Heart right ventricle (tissue), 16 donors: ENCODE measurements at regions of chr11 and their contacts with region 1.

Region 1: DNA sequence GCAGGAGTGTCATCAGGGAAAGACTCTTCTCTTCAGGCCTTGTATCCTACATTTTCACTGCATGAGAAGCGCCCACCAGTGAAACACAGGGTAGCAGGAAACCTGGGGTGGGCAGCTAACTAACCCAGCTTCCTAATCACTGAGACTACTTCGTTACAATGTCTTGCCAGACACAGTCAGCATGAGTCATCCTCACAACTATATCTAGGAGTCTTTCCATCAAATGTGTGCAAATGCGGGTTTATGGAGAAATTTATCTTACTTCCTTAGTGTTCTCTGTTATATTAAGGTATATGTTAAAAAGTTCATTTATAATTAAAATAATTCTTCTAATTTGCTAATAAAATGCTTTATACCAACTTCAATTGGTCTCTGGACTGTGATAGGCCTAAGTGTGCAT is 79.9 kb upstream of the RAB1B start:
- DNase-seq: no peak
- ATAC-seq: no peak
- H3K4me3 ChIP-seq: no peak overlapping the region
- H3K27ac ChIP-seq: no peak overlapping the region
- H3K4me1 ChIP-seq: peaks cover 0 to 16% (median 7%) of the 10 kb centered on the region in 9 donors
- H3K27me3 ChIP-seq: no peaks in the 10 kb centered on the region
- CTCF ChIP-seq: no peak

Region 2: DNA sequence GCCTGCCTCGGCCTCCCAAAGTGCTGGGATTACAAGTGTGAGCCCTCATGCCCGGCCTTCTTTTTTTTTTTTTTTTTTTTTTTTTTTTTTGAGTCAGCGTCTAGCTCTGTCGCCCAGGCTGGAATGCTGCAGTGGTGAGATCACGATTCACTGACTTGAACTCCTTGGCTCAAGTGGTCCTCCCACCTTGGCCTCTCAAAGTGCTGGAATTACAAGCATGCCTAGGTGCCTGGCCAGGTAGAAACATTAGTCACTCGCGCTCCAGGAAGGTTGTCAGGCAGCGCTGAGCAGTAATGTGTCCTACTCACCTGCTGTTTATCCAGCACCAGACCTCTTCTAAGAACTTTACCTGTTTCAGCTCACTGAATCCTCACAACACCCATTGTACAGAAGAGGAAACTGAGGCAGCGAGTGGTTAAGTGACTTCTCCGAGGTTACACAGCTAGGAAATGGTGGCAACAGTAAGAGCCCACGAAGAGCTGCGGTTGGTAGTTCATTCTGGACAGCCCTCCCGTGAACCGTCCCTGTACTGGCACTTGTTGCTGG is 177.3 kb before region 1 on chr11:
- intact Hi-C with region 1: no loop called
- DNase-seq: no peak
- ATAC-seq: no peak
- H3K4me3 ChIP-seq: peak overlapping the region in 2 of 10 donors; percentile 0 to 30
- H3K27ac ChIP-seq: no peak overlapping the region
- H3K4me1 ChIP-seq: peaks cover 0 to 30% (median 14%) of the 10 kb centered on the region in 9 donors
- H3K27me3 ChIP-seq: peaks cover 8 to 39% (median 23%) of the 10 kb centered on the region in 7 donors
- CTCF ChIP-seq: no peak

Region 3: DNA sequence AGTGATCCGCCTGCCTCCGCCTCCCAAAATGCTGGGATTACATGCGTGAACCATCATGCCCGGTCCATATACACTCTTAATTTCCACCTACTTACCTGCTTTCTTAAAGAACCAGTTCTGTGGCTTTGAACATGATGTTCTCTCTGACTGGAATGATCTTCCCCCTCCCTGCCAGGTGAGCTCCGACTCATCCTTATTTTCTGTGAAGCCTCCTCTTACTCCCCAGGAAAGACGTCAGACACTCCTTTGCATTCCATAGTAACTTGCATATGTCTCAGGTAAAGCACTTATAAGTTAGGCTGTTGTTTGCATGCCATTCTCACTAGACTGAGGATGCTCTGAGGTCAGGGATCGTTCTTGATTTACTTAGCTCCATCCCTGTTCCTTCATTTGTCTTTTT is 11.9 kb before region 1 on chr11:
- intact Hi-C with region 1: loop called in 1 of 10 experiments (anchors 1 kb)
- DNase-seq: no peak
- ATAC-seq: no peak
- H3K4me3 ChIP-seq: no peak overlapping the region
- H3K27ac ChIP-seq: no peak overlapping the region
- H3K4me1 ChIP-seq: no peaks in the 10 kb centered on the region
- H3K27me3 ChIP-seq: no peaks in the 10 kb centered on the region
- CTCF ChIP-seq: no peak

Region 4: DNA sequence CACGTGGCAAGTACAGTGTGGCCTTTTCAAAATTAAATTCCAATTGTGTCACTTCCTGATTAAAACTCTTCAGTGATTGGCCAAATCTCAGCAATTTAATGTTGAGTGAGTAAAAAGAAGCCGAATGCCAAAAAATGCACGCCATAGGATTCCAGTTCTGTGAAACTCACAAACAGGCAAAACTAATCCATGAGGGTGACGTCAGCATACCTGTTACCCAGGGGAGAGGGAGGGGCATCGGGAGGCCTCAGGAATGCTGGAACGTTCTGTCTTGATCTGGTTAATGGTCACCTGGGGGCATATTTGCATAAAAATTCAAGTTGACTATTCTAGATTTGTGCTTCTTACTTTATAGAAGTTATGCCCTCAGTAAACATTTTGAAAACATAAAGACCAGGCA is 39.9 kb after region 1 on chr11:
- intact Hi-C with region 1: no loop called
- DNase-seq: no peak
- ATAC-seq: no peak
- H3K4me3 ChIP-seq: no peak overlapping the region
- H3K27ac ChIP-seq: no peak overlapping the region
- H3K4me1 ChIP-seq: no peaks in the 10 kb centered on the region
- H3K27me3 ChIP-seq: no peaks in the 10 kb centered on the region
- CTCF ChIP-seq: no peak

Region 5: DNA sequence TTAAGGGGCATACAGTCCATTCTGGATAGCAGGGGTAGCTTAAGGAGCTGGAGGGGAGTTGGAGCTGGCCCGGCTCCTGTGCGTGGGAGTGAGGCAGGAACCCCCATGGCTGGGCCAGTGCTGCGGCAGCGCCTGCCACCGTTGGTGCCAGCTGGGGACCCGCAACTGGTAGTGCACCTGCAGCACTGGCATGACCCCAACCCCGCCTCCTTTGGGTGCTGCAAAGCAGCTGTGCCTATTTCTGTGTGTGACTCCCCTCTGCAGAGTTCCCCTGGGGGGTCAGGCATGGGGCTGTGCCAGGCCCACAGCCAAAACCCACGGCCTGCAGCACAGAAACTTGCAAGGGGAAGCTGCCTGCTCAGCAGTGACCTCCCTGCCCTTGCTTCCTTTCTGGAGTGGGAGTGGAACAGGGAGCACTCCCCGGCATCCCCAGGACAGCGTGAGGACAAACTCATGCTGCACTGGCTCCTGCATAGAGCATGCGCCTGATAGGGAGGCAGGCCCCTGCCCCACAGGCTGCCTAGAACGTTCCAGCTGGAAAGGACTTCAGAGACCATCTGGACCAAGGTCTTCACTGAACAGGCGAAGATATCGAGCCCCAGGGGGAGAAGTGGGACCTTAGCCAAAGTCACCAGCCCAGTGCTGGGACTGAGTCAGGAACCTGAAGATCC is 53.6 kb after region 1 on chr11:
- intact Hi-C with region 1: loop called in 1 of 10 experiments (anchors 5 kb)
- DNase-seq: no peak
- ATAC-seq: peak in 5 of 8 donors; percentile 25 to 56 (median 46)
- H3K4me3 ChIP-seq: no peak overlapping the region
- H3K27ac ChIP-seq: no peak overlapping the region
- H3K4me1 ChIP-seq: peaks cover 0 to 11% (median 3%) of the 10 kb centered on the region in 9 donors
- H3K27me3 ChIP-seq: no peaks in the 10 kb centered on the region
- CTCF ChIP-seq: no peak

Region 6: GRCh38 chr11:66386171-66387069 is 197.8 kb after region 1 on chr11:
- intact Hi-C with region 1: no loop called
- DNase-seq: peak; percentile 79 to 82
- ATAC-seq: peak in 7 of 8 donors; percentile 49 to 78 (median 65)
- H3K4me3 ChIP-seq: peak overlapping the region in 7 of 10 donors; percentile 6 to 47 (median 17)
- H3K27ac ChIP-seq: peak overlapping the region in 1 of 10 donors; percentile 1
- H3K4me1 ChIP-seq: peaks cover 0 to 14% (median 8%) of the 10 kb centered on the region in 9 donors
- H3K27me3 ChIP-seq: peaks cover 0 to 15% (median 0%) of the 10 kb centered on the region in 7 donors
- CTCF ChIP-seq: peak; percentile 78 to 97 (median 94)

Region 7: GRCh38 chr11:66454249-66454648 is 265.7 kb after region 1 on chr11:
- intact Hi-C with region 1: no loop called
- DNase-seq: no peak
- ATAC-seq: no peak
- H3K4me3 ChIP-seq: no peak overlapping the region
- H3K27ac ChIP-seq: no peak overlapping the region
- H3K4me1 ChIP-seq: peaks cover 0 to 6% (median 0%) of the 10 kb centered on the region in 9 donors
- H3K27me3 ChIP-seq: peaks cover 0 to 6% (median 0%) of the 10 kb centered on the region in 7 donors
- CTCF ChIP-seq: no peak